Prostate gland (tissue), 2 donors: ENCODE measurements at regions of chr5 and their contacts with region 1.

Region 1: GRCh38 chr5:38441453-38442246 is 114.8 kb downstream of the LIFR start:
- DNase-seq: peak; percentile 91
- H3K4me3 ChIP-seq: no peak overlapping the region
- H3K27ac ChIP-seq: peak overlapping the region in 1 of 2 donors; percentile 40
- H3K4me1 ChIP-seq: no peaks in the 10 kb centered on the region
- H3K27me3 ChIP-seq: no peaks in the 10 kb centered on the region
- CTCF ChIP-seq: peak; percentile 82 to 96 (median 94)
- POLR2A ChIP-seq: no peak

Region 2: DNA sequence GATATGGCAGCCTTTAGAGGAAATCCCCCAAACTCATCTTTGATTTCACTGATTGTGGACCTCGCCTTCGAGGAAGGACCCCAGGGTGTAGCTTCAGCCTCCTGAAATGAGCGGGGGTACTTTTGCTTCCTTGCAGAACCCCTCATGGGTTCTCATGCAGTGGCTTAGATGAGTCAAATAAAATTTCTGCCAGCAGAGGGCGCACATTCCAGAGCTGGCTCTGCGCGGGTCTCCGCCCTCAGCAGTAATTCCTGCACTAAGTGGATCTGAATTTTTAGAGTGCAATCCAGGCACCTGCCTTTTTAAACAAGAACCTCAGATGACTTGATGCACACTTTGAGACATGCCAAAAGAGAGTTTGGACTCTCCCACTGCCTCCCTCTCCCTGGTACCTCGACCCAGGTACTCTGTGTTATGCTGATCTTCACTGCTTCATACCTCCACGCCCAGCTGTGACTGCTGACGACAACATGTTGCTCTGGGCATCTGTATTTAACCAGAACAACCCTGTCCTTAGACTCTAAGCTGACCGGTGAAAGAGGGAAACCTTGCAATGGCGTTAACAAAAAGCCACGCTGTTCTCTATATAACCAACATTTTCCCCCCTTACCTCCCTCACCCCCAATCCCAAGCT is 176.0 kb before region 1 on chr5:
- intact Hi-C with region 1: no loop called
- DNase-seq: peak; percentile 28
- H3K4me3 ChIP-seq: no peak overlapping the region
- H3K27ac ChIP-seq: no peak overlapping the region
- H3K4me1 ChIP-seq: no peaks in the 10 kb centered on the region
- H3K27me3 ChIP-seq: no peaks in the 10 kb centered on the region
- CTCF ChIP-seq: peak; percentile 35 to 64 (median 46)
- POLR2A ChIP-seq: no peak

Region 3: DNA sequence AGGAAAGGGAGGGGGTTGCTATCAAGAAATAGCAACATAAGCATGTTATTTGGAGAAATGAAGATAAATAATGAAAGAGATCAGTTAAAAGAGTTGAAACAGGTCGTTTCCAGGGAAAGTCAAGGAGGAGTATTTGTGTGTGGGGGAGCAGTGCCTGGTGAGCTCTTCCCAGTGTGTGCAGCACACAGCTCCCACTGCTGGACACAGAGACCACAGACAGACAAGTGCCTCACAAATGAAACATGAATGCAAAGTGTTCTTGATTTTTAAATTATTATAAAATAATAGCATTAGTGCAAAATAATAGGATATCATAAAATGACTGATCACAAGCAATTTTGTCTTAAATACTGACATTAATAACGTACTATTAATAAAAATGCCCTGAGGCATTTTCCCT is 74.0 kb after region 1 on chr5:
- intact Hi-C with region 1: loop called (anchors 5 kb)
- DNase-seq: no peak
- H3K4me3 ChIP-seq: no peak overlapping the region
- H3K27ac ChIP-seq: no peak overlapping the region
- H3K4me1 ChIP-seq: no peaks in the 10 kb centered on the region
- H3K27me3 ChIP-seq: no peaks in the 10 kb centered on the region
- CTCF ChIP-seq: peak in 1 of 4 experiments; percentile 17
- POLR2A ChIP-seq: no peak

Region 4: DNA sequence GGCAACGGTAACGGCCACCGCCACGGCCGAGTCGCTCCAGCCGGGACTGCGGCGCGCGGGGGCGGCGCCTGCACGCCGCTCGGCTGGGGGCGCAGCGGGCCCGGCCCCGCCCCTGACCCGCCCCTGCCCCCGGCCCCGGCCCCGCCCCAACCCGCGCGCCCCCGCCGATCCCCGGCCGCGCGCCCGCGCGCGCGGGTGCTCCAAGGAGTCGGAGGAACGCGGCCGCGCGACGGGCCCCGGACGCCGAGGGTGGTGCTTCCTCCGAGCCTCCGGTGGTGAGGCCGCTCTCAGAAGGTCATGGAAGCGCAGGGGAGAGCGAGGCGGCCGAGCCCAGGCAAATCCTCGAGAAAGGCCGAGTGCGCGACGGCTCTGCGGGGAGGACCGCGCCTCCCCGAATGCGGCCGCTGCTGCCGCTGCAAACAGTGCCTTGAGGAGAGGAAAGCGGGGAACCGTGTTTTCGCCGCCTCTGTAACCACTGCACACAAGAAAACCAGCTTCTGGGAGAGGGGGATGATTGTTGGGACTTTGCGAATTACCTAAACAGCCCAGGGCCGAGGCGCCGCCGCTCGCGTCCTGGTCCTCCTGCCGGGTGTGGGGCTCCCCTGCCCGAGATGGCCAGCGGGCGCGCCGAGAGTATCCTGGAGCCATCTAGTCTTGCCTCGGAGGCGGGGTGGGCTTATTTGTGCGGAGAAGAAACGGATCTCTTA is 115.1 kb after region 1 on chr5 and contains the start of gene LIFR:
- intact Hi-C with region 1: loop called (anchors 5 kb)
- DNase-seq: peak; percentile 84
- H3K4me3 ChIP-seq: peak within 1 kb of the TSS; percentile 90 to 96
- H3K27ac ChIP-seq: peak within 1 kb of the TSS; percentile 99
- H3K4me1 ChIP-seq: no peaks in the 10 kb centered on the region
- H3K27me3 ChIP-seq: no peaks in the 10 kb centered on the region
- CTCF ChIP-seq: no peak
- POLR2A ChIP-seq: peak; percentile 81
- total RNA-seq, gene LIFR: 68.5 to 120 TPM

Region 5: DNA sequence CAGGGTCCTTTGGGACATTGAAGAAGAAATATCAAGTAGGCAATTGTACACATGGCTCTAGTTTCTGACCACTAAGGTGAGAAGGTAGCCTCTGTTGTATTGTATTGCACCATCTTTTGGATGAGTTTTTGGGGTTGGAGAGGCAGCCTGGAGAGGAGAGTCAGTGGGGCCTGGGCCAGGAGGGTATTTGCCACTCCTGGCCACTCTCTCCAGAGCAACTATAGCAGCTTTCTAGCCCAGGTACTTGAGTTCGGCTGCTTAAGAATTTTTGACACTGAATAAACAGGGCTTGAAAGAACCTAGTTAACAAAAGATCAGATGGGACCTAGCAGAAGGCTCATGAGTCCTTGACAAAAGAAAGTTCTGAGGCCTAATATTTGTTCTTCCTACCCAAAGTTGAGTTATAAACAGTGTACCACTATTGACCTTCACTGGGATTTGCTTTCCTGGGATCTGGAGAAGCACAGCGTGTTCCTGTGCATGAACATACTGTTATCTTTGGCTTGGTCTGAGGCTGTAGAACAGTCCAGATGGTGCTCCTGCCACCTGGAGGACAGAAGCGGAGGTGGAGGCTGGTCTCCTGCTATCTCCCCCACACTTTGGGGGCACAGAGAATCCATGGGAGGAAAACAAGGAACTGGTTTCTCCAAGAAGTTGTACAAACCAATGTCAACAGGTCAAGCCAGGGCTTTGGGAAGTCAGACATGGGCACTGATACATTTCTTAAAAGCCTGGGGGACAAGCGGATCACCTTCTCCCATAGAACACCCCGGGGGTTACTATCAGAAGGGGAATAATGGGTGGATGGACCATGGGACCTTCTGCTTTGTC is 225.2 kb after region 1 on chr5:
- intact Hi-C with region 1: loop called (anchors 5 kb)
- DNase-seq: peak; percentile 73
- H3K4me3 ChIP-seq: no peak overlapping the region
- H3K27ac ChIP-seq: peak overlapping the region; percentile 74 to 82
- H3K4me1 ChIP-seq: peaks cover 7% of the 10 kb centered on the region
- H3K27me3 ChIP-seq: no peaks in the 10 kb centered on the region
- CTCF ChIP-seq: peak; percentile 56 to 82 (median 75)
- POLR2A ChIP-seq: no peak

Region 6: DNA sequence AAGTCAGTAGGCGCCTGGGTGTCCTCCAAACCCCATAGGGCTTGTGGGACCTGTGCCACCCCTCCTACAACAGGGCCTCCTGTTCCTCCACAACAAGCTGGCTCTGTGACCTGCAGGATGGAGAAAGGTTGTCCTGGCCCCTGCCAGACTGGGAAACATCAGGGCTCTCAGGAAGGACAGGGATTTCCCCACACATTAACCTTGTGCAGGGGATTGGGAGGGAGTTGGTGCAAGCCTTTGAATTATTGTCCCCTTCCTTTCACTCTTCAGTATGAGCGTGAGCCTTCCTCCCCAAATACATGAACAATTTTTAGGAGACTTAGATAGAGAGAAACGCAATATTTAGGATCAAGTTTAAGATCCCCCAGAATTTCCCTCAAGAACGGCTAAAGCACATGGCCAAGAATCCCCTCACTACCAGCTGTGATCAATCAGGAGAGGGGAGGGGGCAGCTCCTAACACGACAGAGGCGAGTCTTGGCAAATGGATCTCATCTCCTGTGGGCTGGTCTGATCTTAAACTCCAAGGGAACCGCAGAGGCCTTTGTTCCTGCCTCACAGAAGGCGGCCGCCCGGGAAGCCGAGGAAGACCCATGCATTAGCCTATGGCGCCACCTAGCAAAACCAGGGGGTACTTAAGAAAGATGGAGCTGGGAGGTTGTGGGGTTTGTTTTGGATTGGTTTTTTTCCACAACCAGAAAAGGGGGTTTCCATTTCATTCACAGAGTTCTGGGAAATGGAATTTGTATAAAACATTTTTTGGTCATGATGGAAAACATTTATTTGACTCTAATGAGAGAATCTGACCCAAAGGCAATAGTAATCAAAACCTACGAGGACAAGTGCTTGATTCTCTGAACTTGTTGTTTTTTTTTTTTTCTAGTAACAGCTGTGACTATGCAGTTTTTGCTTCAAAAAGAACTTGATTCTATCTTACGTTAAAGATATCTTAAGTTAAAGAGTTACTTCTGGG is 368.0 kb after region 1 on chr5:
- intact Hi-C with region 1: loop called (anchors 1 kb)
- DNase-seq: peak; percentile 83
- H3K4me3 ChIP-seq: no peak overlapping the region
- H3K27ac ChIP-seq: no peak overlapping the region
- H3K4me1 ChIP-seq: no peaks in the 10 kb centered on the region
- H3K27me3 ChIP-seq: no peaks in the 10 kb centered on the region
- CTCF ChIP-seq: peak; percentile 62 to 93 (median 80)
- POLR2A ChIP-seq: no peak

Region 7: GRCh38 chr5:39074016-39074886 is 632.6 kb after region 1 on chr5 and contains the start of gene RICTOR:
- intact Hi-C with region 1: loop called (anchors 10 kb)
- DNase-seq: peak; percentile 87
- H3K4me3 ChIP-seq: peak within 1 kb of the TSS; percentile 98 to 99
- H3K27ac ChIP-seq: peak within 1 kb of the TSS; percentile 99 to 100
- H3K4me1 ChIP-seq: peaks cover 4% of the 10 kb centered on the region
- H3K27me3 ChIP-seq: no peaks in the 10 kb centered on the region
- CTCF ChIP-seq: no peak
- POLR2A ChIP-seq: peak; percentile 53
- total RNA-seq, gene RICTOR: 21.5 to 36.8 TPM